CD4-positive, alpha-beta T cell (primary cell): ENCODE measurements at regions of chr17 and their contacts with region 1.

Region 1: DNA sequence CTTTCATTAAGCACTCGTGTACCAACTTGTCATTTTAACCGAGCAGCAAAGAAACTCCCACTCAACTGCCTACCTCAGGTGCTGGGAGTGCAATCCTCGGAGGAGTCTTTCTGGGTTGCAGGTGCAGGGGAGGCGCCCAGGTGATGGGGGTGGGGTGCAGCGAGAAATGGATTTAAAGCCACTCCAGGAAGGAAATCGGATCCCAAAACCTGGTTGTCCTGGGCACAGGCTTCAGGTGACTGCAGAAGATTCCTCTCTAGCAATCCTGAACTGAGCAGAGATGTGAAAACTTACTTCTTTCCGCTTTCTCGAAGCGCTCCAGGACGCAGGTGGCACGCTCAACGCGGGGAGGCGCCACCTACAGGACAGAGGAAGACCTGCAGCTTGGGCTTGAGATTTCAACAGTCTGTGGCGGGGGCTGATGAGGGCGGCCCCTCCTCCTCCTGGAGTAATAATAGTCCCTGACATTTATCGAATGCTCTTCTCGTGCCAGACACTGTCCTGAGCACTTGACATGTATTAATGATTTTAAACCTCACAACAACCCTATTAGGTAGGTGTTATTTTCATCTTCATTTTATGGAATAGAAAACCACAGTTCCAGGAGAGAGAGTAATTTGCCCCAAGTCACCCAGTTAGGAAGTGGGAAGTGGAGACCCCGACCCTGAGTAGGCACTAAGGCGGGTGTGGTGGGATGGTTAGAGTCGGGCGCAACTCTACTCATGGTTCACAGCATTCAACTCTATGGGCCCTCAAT is 27.2 kb upstream of the SKAP1 start:
- DNase-seq: peak; percentile 64 to 92 (median 70)
- ATAC-seq: peak; percentile 75
- H3K4me3 ChIP-seq: peak overlapping the region; percentile 37
- H3K4me3 Mint-ChIP-seq: peak overlapping the region; percentile 76
- H3K27ac ChIP-seq: no peak overlapping the region
- H3K27ac Mint-ChIP-seq: no peak overlapping the region
- H3K4me1 ChIP-seq: peaks cover 52% of the 10 kb centered on the region
- H3K4me1 Mint-ChIP-seq: peaks cover 61% of the 10 kb centered on the region
- H3K27me3 ChIP-seq: no peaks in the 10 kb centered on the region
- H3K27me3 Mint-ChIP-seq: no peaks in the 10 kb centered on the region
- CTCF ChIP-seq: peak; percentile 95

Region 2: GRCh38 chr17:48134912-48135480 is 322.3 kb before region 1 on chr17:
- CTCF ChIA-PET with region 1: no interaction called
- POLR2A ChIA-PET with region 1: no interaction called
- intact Hi-C with region 1: no loop called
- DNase-seq: no peak
- ATAC-seq: no peak
- H3K4me3 ChIP-seq: no peak overlapping the region
- H3K4me3 Mint-ChIP-seq: no peak overlapping the region
- H3K27ac ChIP-seq: no peak overlapping the region
- H3K27ac Mint-ChIP-seq: peak overlapping the region; percentile 56
- H3K4me1 ChIP-seq: no peaks in the 10 kb centered on the region
- H3K4me1 Mint-ChIP-seq: no peaks in the 10 kb centered on the region
- H3K27me3 ChIP-seq: no peaks in the 10 kb centered on the region
- H3K27me3 Mint-ChIP-seq: no peaks in the 10 kb centered on the region
- CTCF ChIP-seq: no peak

Region 3: GRCh38 chr17:48259694-48260291 is 197.5 kb before region 1 on chr17:
- CTCF ChIA-PET with region 1: no interaction called
- POLR2A ChIA-PET with region 1: no interaction called
- intact Hi-C with region 1: loop called in 1 of 2 experiments (anchors 5 kb)
- DNase-seq: peak in 3 of 14 experiments; percentile 13 to 22 (median 21)
- ATAC-seq: no peak
- H3K4me3 ChIP-seq: no peak overlapping the region
- H3K4me3 Mint-ChIP-seq: no peak overlapping the region
- H3K27ac ChIP-seq: no peak overlapping the region
- H3K27ac Mint-ChIP-seq: no peak overlapping the region
- H3K4me1 ChIP-seq: no peaks in the 10 kb centered on the region
- H3K4me1 Mint-ChIP-seq: peaks cover 15% of the 10 kb centered on the region
- H3K27me3 ChIP-seq: no peaks in the 10 kb centered on the region
- H3K27me3 Mint-ChIP-seq: no peaks in the 10 kb centered on the region
- CTCF ChIP-seq: peak; percentile 42

Region 4: DNA sequence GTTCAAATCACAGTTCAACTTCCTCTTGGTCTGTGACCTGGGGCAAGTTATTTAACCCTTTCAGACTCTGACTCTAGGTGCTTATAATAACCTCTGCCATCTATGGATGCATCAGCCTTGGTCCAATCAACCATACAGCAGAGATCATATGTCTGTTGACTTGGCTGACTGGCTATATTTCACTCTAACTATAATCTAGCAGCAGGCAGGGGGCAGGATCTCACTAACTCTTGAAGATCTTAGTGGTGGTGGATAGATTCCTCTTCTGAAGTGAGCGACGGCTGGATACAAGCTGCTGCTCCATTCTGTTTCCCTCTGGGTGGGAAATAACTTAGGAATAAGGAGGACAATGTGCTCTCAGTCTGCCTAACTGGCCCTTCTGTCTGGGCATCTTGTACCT is 173.8 kb before region 1 on chr17:
- CTCF ChIA-PET with region 1: no interaction called
- POLR2A ChIA-PET with region 1: no interaction called
- intact Hi-C with region 1: no loop called
- DNase-seq: no peak
- ATAC-seq: no peak
- H3K4me3 ChIP-seq: no peak overlapping the region
- H3K4me3 Mint-ChIP-seq: no peak overlapping the region
- H3K27ac ChIP-seq: no peak overlapping the region
- H3K27ac Mint-ChIP-seq: no peak overlapping the region
- H3K4me1 ChIP-seq: no peaks in the 10 kb centered on the region
- H3K4me1 Mint-ChIP-seq: peaks cover 21% of the 10 kb centered on the region
- H3K27me3 ChIP-seq: no peaks in the 10 kb centered on the region
- H3K27me3 Mint-ChIP-seq: no peaks in the 10 kb centered on the region
- CTCF ChIP-seq: no peak

Region 5: DNA sequence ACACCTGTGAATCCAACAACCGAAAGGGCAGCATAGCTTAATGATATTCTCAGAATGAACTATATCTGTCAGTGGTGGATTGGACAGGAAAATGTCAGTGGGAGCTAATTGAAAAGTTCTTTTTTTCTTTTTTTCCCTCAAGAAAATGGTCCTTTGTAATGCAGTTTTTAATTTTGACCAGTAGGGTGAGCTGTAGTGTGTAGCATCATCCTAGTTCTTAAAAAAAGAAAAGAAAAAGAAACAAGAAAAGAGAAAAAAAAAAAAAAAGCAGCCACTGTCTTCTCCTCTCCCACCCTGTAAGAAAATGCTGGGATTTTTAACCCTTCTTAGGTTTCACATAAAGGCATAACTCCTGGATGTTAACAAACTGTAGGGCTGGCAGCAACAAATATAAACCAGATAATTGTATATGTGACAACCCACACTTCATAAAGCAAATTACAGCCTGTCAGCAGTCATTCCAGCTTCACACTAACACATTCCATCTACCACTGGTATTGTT is 105.4 kb before region 1 on chr17:
- CTCF ChIA-PET with region 1: interaction called, 34 read pairs
- POLR2A ChIA-PET with region 1: interaction called, 8 read pairs
- intact Hi-C with region 1: loop called (anchors 1 kb)
- DNase-seq: peak in 3 of 14 experiments; percentile 57 to 71 (median 68)
- ATAC-seq: peak; percentile 76
- H3K4me3 ChIP-seq: no peak overlapping the region
- H3K4me3 Mint-ChIP-seq: no peak overlapping the region
- H3K27ac ChIP-seq: no peak overlapping the region
- H3K27ac Mint-ChIP-seq: no peak overlapping the region
- H3K4me1 ChIP-seq: no peaks in the 10 kb centered on the region
- H3K4me1 Mint-ChIP-seq: peaks cover 27% of the 10 kb centered on the region
- H3K27me3 ChIP-seq: no peaks in the 10 kb centered on the region
- H3K27me3 Mint-ChIP-seq: no peaks in the 10 kb centered on the region
- CTCF ChIP-seq: peak; percentile 93

Region 6: GRCh38 chr17:48392857-48393256 is 64.4 kb before region 1 on chr17:
- CTCF ChIA-PET with region 1: interaction called, 6 read pairs
- POLR2A ChIA-PET with region 1: interaction called, 11 read pairs
- intact Hi-C with region 1: loop called (anchors 5 kb)
- DNase-seq: no peak
- ATAC-seq: no peak
- H3K4me3 ChIP-seq: no peak overlapping the region
- H3K4me3 Mint-ChIP-seq: no peak overlapping the region
- H3K27ac ChIP-seq: no peak overlapping the region
- H3K27ac Mint-ChIP-seq: no peak overlapping the region
- H3K4me1 ChIP-seq: peaks cover 4% of the 10 kb centered on the region
- H3K4me1 Mint-ChIP-seq: peaks cover 54% of the 10 kb centered on the region
- H3K27me3 ChIP-seq: no peaks in the 10 kb centered on the region
- H3K27me3 Mint-ChIP-seq: no peaks in the 10 kb centered on the region
- CTCF ChIP-seq: no peak

Region 7: GRCh38 chr17:48413613-48414405 is 43.4 kb before region 1 on chr17:
- CTCF ChIA-PET with region 1: interaction called, 13 read pairs
- POLR2A ChIA-PET with region 1: interaction called, 17 read pairs
- intact Hi-C with region 1: loop called (anchors 2 to 5 kb)
- DNase-seq: peak in 3 of 14 experiments; percentile 22 to 50 (median 28)
- ATAC-seq: peak; percentile 74
- H3K4me3 ChIP-seq: no peak overlapping the region
- H3K4me3 Mint-ChIP-seq: peak overlapping the region; percentile 57
- H3K27ac ChIP-seq: peak overlapping the region; percentile 59 to 63
- H3K27ac Mint-ChIP-seq: peak overlapping the region; percentile 86
- H3K4me1 ChIP-seq: peaks cover 49% of the 10 kb centered on the region
- H3K4me1 Mint-ChIP-seq: peaks cover 86% of the 10 kb centered on the region
- H3K27me3 ChIP-seq: no peaks in the 10 kb centered on the region
- H3K27me3 Mint-ChIP-seq: no peaks in the 10 kb centered on the region
- CTCF ChIP-seq: no peak

Region 8: DNA sequence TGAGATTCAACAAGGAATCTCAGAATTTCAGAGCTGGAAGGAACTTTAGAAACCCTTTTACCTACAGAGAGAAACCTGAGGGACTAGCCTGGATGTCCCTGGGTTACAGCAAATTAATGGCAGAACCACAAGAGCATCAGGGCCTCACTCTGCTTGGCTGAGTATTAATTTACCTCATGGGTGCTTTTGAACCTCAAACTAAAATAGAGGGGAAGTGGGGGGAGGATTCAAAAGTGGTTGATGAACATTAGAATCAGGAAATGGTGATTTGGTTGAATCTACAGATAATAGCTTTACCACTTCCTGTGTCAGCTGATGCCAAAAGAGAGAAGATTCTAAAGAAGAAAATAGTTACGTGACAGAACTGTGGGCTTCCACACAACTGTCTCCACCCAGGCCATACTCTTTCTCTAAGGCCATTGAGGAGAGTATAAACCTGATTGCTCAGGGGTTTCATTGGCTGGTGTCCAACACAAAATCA is 16.0 kb before region 1 on chr17:
- CTCF ChIA-PET with region 1: interaction called, 36 read pairs
- POLR2A ChIA-PET with region 1: interaction called, 135 read pairs
- intact Hi-C with region 1: loop called (anchors 1 kb)
- DNase-seq: peak in 9 of 14 experiments; percentile 7 to 94 (median 31)
- ATAC-seq: peak; percentile 66
- H3K4me3 ChIP-seq: peak overlapping the region; percentile 1
- H3K4me3 Mint-ChIP-seq: peak overlapping the region; percentile 36
- H3K27ac ChIP-seq: peak overlapping the region; percentile 66 to 72
- H3K27ac Mint-ChIP-seq: peak overlapping the region; percentile 95
- H3K4me1 ChIP-seq: peaks cover 98% of the 10 kb centered on the region
- H3K4me1 Mint-ChIP-seq: peaks cover 94% of the 10 kb centered on the region
- H3K27me3 ChIP-seq: no peaks in the 10 kb centered on the region
- H3K27me3 Mint-ChIP-seq: no peaks in the 10 kb centered on the region
- CTCF ChIP-seq: no peak

Region 9: GRCh38 chr17:48791128-48792032 is 334.1 kb after region 1 on chr17:
- CTCF ChIA-PET with region 1: no interaction called
- POLR2A ChIA-PET with region 1: no interaction called
- intact Hi-C with region 1: no loop called
- DNase-seq: peak in 5 of 14 experiments; percentile 4 to 54 (median 37)
- ATAC-seq: no peak
- H3K4me3 ChIP-seq: no peak overlapping the region
- H3K4me3 Mint-ChIP-seq: no peak overlapping the region
- H3K27ac ChIP-seq: no peak overlapping the region
- H3K27ac Mint-ChIP-seq: no peak overlapping the region
- H3K4me1 ChIP-seq: peaks cover 6% of the 10 kb centered on the region
- H3K4me1 Mint-ChIP-seq: no peaks in the 10 kb centered on the region
- H3K27me3 ChIP-seq: peaks cover 13 to 21% of the 10 kb centered on the region in 2 experiments
- H3K27me3 Mint-ChIP-seq: peaks cover 72% of the 10 kb centered on the region
- CTCF ChIP-seq: no peak